HEK293T (cell line): ENCODE measurements at regions of chr19 and their contacts with region 1.

Region 1: GRCh38 chr19:33161201-33161600 is 29.3 kb downstream of the WDR88 start:
- DNase-seq: no peak

Region 2: GRCh38 chr19:33176670-33177416 is 15.6 kb after region 1 on chr19:
- CTCF ChIA-PET with region 1: no interaction called
- POLR2A ChIA-PET with region 1: interaction called, 23 read pairs
- DNase-seq: peak; percentile 96